Psoas muscle (tissue), 8 donors: ENCODE measurements at regions of chr18 and their contacts with region 1.

Region 1: GRCh38 chr18:36572135-36572856 is 256.5 kb downstream of the TPGS2 start:
- DNase-seq: peak in 1 of 2 donors; percentile 23
- ATAC-seq: peak; percentile 75 to 96 (median 82)
- H3K4me3 ChIP-seq: no peak overlapping the region
- H3K27ac ChIP-seq: no peak overlapping the region
- H3K4me1 ChIP-seq: no peaks in the 10 kb centered on the region
- H3K27me3 ChIP-seq: no peaks in the 10 kb centered on the region
- CTCF ChIP-seq: peak; percentile 61

Region 2: DNA sequence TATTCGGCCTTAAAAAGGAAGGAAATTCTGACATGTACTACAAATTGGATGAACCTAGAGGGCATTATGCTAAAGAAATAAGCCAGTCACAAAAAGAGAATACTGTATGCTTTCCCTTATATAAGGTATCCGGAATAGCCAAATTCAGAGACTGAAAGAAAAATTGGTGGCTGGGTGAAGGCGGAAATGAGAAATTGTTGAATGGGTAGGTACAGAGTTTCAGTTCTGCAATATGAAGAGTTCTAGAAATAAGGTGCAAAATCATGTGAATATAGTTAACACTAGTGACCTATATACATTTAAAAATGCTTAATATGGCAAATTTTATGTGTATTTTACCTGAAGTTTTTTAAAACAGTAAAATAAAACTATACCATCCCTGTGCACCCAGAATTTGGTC is 556.7 kb before region 1 on chr18:
- intact Hi-C with region 1: loop called (anchors 5 to 10 kb)
- DNase-seq: no peak
- ATAC-seq: no peak
- H3K4me3 ChIP-seq: no peak overlapping the region
- H3K27ac ChIP-seq: no peak overlapping the region
- H3K4me1 ChIP-seq: no peaks in the 10 kb centered on the region
- H3K27me3 ChIP-seq: no peaks in the 10 kb centered on the region
- CTCF ChIP-seq: no peak

Region 3: DNA sequence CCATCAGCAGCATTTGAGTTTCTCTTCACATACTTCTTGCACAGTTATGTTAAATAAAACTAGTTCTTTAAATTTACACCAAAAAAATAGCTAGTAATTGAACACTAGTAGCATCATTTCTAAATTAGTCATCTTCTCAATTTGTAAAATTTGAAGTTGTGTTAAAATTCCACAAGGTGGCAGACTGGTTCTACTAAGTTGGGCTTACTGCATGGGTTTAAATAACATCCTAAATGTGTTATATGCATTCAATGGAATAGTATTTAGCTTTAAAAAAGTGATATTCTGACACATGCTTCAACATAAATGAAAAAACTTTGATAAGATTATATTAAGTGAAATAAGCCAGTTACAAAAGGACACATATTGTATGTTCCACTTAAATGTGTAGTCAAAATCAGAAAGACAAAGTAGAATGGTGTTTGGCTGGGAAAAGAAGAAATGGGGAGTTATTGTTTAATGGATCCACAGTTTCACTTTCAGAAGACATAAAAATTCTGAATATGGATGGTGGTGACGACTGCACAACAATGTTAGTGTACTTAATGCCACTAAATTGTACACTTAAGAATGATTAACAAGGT is 476.3 kb before region 1 on chr18:
- intact Hi-C with region 1: loop called in 1 of 2 experiments (anchors 10 kb)
- DNase-seq: no peak
- ATAC-seq: peak in 1 of 4 donors; percentile 68
- H3K4me3 ChIP-seq: no peak overlapping the region
- H3K27ac ChIP-seq: no peak overlapping the region
- H3K4me1 ChIP-seq: no peaks in the 10 kb centered on the region
- H3K27me3 ChIP-seq: no peaks in the 10 kb centered on the region
- CTCF ChIP-seq: peak; percentile 66

Region 4: GRCh38 chr18:36186911-36187834 is 385.1 kb before region 1 on chr18 and contains the start of gene MOCOS:
- intact Hi-C with region 1: loop called in 1 of 2 experiments (anchors 10 kb)
- DNase-seq: peak; percentile 80 to 84
- ATAC-seq: peak; percentile 83 to 85 (median 84)
- H3K4me3 ChIP-seq: peak within 1 kb of the TSS; percentile 92
- H3K27ac ChIP-seq: peak within 1 kb of the TSS; percentile 36
- H3K4me1 ChIP-seq: peaks cover 3% of the 10 kb centered on the region
- H3K27me3 ChIP-seq: peaks cover 0 to 9% (median 0%) of the 10 kb centered on the region in 3 donors
- CTCF ChIP-seq: no peak
- total RNA-seq, gene MOCOS: 0.30 to 4.8 (median 1.9) TPM

Region 5: GRCh38 chr18:36296650-36297416 is 275.5 kb before region 1 on chr18:
- intact Hi-C with region 1: loop called (anchors 2 to 5 kb)
- DNase-seq: peak; percentile 66 to 75
- ATAC-seq: peak; percentile 39 to 64 (median 44)
- H3K4me3 ChIP-seq: peak overlapping the region; percentile 86
- H3K27ac ChIP-seq: peak overlapping the region; percentile 81
- H3K4me1 ChIP-seq: peaks cover 9% of the 10 kb centered on the region
- H3K27me3 ChIP-seq: peaks cover 0 to 9% (median 0%) of the 10 kb centered on the region in 3 donors
- CTCF ChIP-seq: peak; percentile 20

Region 6: DNA sequence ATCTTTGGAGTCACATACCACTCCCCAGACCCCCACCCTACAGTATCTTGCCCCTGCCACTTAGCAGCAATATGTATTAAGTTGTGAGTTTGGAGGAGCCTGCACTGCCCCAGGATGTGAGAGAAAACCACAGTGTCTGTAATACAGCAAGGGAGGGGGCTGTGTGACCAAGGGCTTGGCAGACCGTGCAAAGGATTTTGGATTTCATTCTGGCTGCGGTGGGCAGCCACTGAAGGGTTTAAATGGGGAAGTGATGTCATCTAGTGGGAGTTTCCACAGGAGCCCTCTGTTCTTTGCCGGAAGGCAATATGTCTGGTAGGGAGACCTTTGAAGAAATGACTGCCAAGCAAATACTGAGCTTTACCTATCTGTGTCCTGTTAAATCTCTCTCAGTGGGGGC is 72.4 kb before region 1 on chr18:
- intact Hi-C with region 1: loop called in 1 of 2 experiments (anchors 10 kb)
- DNase-seq: no peak
- ATAC-seq: peak; percentile 35 to 69 (median 46)
- H3K4me3 ChIP-seq: no peak overlapping the region
- H3K27ac ChIP-seq: no peak overlapping the region
- H3K4me1 ChIP-seq: peaks cover 7% of the 10 kb centered on the region
- H3K27me3 ChIP-seq: no peaks in the 10 kb centered on the region
- CTCF ChIP-seq: no peak

Region 7: GRCh38 chr18:36511791-36512352 is 60.4 kb before region 1 on chr18:
- intact Hi-C with region 1: no loop called
- DNase-seq: no peak
- ATAC-seq: peak in 1 of 4 donors; percentile 31
- H3K4me3 ChIP-seq: no peak overlapping the region
- H3K27ac ChIP-seq: no peak overlapping the region
- H3K4me1 ChIP-seq: no peaks in the 10 kb centered on the region
- H3K27me3 ChIP-seq: no peaks in the 10 kb centered on the region
- CTCF ChIP-seq: no peak

Region 8: DNA sequence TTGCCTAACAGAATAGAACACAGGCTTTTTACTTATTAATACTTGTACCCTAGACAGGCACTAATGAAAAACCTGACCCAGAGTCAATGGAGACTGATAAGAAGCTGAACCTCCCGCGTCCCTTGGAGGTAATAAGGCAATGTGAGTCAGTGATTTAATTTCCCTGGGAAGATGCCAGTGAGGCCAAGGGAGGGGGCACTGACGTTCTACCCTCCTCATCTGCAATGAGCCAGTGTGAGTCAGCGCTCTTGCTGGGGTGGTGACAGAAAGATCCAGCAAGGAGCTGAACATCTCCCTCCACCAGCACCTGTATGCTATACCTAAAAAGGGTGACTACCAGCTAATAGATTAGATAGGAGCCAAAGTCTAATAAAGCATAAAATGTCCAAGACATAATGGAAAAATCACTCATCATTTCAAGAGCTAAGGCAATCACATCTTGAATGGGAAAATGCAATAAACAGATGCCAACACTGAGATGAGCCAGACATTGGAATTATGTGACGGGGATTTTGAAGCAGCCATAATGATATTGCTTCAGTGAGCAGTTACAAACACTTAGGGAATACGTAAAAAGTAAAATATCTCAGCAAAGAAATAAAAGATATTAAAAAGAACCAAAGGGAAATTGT is 139.6 kb after region 1 on chr18:
- intact Hi-C with region 1: no loop called
- DNase-seq: peak in 1 of 2 donors; percentile 56
- ATAC-seq: peak; percentile 77 to 88 (median 86)
- H3K4me3 ChIP-seq: no peak overlapping the region
- H3K27ac ChIP-seq: no peak overlapping the region
- H3K4me1 ChIP-seq: no peaks in the 10 kb centered on the region
- H3K27me3 ChIP-seq: no peaks in the 10 kb centered on the region
- CTCF ChIP-seq: no peak